ENCODE measurements at regions of chr6 and their contacts with region 1.

Region 1: DNA sequence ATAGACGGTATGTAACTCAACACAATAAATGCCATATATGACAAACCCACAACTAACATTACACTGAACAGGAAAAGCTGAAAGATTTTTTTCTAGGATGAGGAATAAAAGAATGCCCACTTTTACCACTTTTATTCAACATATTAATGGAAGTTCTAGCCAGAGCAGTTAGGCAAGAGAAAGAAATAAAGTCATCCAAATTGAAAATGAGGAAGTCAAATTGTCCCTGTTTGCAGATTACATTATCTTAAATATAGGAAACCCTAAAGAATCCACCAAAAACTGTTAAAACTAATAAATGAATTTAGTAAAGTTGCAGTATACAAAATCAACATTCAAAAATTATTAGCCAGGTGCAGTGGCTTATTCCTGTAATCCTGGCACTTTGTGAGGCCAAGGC is 24.6 kb upstream of the ADGB start:
- DNase-seq: no peak
- ATAC-seq: no peak
- H3K4me3 ChIP-seq: no peak overlapping the region
- H3K27ac ChIP-seq: no peak overlapping the region
- H3K4me1 ChIP-seq: peaks cover 0 to 3% (median 0%) of the 10 kb centered on the region in 12 donors
- H3K27me3 ChIP-seq: no peaks in the 10 kb centered on the region
- CTCF ChIP-seq: no peak
- POLR2A ChIP-seq: no peak

Region 2: DNA sequence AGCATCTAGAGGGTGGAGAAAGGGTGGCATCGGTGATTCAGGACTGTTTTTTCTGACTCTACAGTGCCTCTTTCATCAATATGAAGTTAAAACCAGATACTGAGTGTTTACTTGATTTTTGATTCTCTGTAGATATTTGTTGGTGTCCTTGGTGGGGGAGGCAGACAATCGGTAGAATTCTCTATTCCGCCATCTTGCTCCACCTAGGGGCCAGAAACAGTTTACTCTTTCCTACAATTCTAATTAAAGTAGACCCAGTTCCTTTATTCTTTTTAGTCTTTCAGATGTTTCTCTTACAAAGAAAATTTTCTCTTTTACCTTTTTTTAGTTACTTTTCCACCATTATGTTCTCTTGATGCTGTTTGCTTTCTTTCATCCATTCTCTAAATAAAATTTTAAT is 192.7 kb before region 1 on chr6:
- intact Hi-C with region 1: no loop called
- DNase-seq: no peak
- ATAC-seq: no peak
- H3K4me3 ChIP-seq: no peak overlapping the region
- H3K27ac ChIP-seq: no peak overlapping the region
- H3K4me1 ChIP-seq: peaks cover 0 to under 1% (median 0%) of the 10 kb centered on the region in 12 donors
- H3K27me3 ChIP-seq: no peaks in the 10 kb centered on the region
- CTCF ChIP-seq: peak in 1 of 12 donors; percentile 6
- POLR2A ChIP-seq: no peak

Region 3: GRCh38 chr6:146613947-146614346 is 39.7 kb after region 1 on chr6:
- intact Hi-C with region 1: loop called in 1 of 10 experiments (anchors 5 kb)
- DNase-seq: no peak
- ATAC-seq: no peak
- H3K4me3 ChIP-seq: no peak overlapping the region
- H3K27ac ChIP-seq: no peak overlapping the region
- H3K4me1 ChIP-seq: no peaks in the 10 kb centered on the region
- H3K27me3 ChIP-seq: no peaks in the 10 kb centered on the region
- CTCF ChIP-seq: no peak
- POLR2A ChIP-seq: no peak